ENCODE measurements at regions of chr12 and their contacts with region 1.

Region 1: DNA sequence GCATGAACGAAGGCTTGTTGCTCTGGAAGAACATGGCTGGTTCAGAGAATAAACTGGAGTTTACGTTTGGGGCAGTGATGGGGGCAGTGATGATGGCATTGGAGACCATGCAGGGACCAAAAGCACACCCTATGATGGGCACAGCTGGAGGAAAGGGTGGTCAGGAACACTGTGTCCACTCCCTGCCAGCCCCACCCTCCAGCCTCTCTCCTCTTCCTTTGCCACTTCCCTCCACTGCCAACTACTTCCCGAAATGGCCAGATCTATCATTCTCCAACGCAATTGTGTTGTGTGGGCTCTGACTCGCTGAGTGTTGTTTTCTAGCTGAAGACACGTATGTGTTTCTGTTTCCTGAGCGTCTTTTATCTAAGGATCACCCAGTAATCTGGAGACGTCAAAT is 39.3 kb upstream of the GSG1 start:
- DNase-seq: no peak
- H3K4me3 ChIP-seq: no peak overlapping the region
- CTCF ChIP-seq: no peak

Region 2: DNA sequence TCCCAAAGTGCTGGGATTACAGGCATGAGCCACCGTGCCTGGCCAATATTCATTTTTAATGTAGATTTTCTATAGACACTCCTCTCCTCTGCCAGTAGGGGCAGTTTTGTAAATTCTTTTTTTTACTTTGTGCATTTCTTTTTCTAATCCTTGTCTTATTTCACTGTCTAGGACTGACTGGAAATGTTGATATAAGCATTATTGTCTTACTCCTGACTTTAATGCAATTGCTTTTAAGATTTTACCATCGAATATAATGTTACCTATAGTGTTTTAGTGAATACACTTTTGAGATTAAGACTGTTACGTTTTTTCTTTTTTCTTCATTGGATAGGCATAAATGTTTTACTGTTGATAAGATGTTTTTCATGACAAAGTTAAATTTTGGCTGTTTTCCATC is 18.4 kb after region 1 on chr12:
- CTCF ChIA-PET with region 1: interaction called, 10 read pairs
- POLR2A ChIA-PET with region 1: no interaction called
- DNase-seq: no peak
- H3K4me3 ChIP-seq: no peak overlapping the region
- CTCF ChIP-seq: no peak

Region 3: DNA sequence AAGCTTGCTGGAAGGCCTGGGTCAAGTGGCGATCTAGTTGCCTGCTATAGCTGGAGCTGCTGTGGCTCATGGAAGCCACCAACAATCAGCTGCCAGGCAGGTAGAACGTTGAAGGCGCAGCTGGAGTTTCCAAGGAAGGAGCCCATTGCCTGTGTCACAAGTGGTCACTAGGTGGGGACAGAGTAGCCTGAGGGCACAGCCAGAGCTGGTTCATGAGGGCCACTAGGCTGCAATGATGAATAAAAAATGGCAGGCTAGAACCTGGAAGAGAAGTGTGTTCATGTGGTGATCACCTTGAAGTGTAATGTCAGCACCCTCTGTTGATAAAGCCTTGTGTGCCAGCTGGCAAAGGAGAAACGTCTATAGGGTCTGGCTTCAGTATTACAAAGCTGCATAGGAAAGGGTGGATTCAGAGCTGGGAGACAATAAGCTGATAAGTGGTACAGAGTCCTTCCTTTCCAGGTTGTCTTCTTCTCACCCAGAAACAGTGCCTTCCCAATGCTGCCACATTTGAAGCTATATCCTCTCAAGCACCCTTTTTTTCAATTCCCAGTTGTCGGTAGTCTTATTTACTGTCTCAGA is 219.6 kb after region 1 on chr12:
- CTCF ChIA-PET with region 1: no interaction called
- POLR2A ChIA-PET with region 1: no interaction called
- DNase-seq: no peak
- H3K4me3 ChIP-seq: no peak overlapping the region
- CTCF ChIP-seq: peak; percentile 80

Region 4: DNA sequence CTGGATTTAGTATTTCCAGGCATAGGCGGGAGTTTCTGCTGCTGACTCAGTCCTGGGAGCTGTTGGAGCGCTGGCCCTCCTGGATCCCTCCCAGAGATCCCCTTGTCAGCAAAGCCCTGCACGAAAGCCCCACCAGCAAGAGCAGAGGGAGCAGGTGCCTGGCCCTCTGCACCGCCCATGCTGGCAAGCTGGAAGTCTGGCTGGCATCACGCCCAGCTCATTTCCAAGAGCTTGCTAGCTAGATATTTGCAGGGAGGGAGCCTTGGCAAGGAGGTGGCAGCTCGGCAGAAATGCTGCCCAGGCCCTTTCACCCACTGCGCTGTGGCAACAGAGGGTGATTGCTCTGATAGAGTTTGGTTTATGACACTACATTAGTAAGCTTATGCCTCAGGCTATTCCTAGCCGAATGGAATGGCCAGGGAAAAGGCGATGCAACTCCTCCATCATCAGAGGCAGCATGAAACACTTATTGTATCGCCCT is 247.7 kb after region 1 on chr12:
- CTCF ChIA-PET with region 1: no interaction called
- POLR2A ChIA-PET with region 1: no interaction called
- DNase-seq: no peak
- H3K4me3 ChIP-seq: no peak overlapping the region
- CTCF ChIP-seq: no peak